T-cell (primary cell): ENCODE measurements at regions of chr5 and their contacts with region 1.

Region 1: GRCh38 chr5:98557916-98558315 is 215.5 kb upstream of the RGMB start:
- DNase-seq: no peak
- ATAC-seq: no peak
- H3K4me3 ChIP-seq: no peak overlapping the region
- H3K4me3 Mint-ChIP-seq: no peak overlapping the region
- H3K27ac ChIP-seq: no peak overlapping the region
- H3K27ac Mint-ChIP-seq: no peak overlapping the region
- H3K4me1 ChIP-seq: no peaks in the 10 kb centered on the region
- H3K4me1 Mint-ChIP-seq: no peaks in the 10 kb centered on the region
- H3K27me3 ChIP-seq: no peaks in the 10 kb centered on the region
- H3K27me3 Mint-ChIP-seq: peaks cover 0 to 1% of the 10 kb centered on the region in 2 donors

Region 2: GRCh38 chr5:98768160-98769005 is 210.5 kb after region 1 on chr5:
- CTCF ChIA-PET with region 1: interaction called in 1 of 2 experiments, 10 read pairs
- POLR2A ChIA-PET with region 1: no interaction called
- DNase-seq: peak in 14 of 35 experiments; percentile 2 to 57 (median 21)
- ATAC-seq: peak in 3 of 4 experiments; percentile 22 to 29 (median 25)
- H3K4me3 ChIP-seq: peak overlapping the region; percentile 58 to 91
- H3K4me3 Mint-ChIP-seq: peak overlapping the region; percentile 92 to 99 (median 96)
- H3K27ac ChIP-seq: no peak overlapping the region
- H3K27ac Mint-ChIP-seq: peak overlapping the region in 1 of 2 donors; percentile 37
- H3K4me1 ChIP-seq: peaks cover 36 to 40% of the 10 kb centered on the region in 2 experiments
- H3K4me1 Mint-ChIP-seq: peaks cover 43 to 49% (median 44%) of the 10 kb centered on the region in 3 donors
- H3K27me3 ChIP-seq: peaks cover 16 to 36% of the 10 kb centered on the region in 2 experiments
- H3K27me3 Mint-ChIP-seq: peaks cover 23 to 45% of the 10 kb centered on the region in 2 donors